Activated CD4-positive, alpha-beta T cell treated with anti-CD3 and anti-CD28 coated beads for 36 hours (primary cell): ENCODE measurements at regions of chr9 and their contacts with region 1.

Region 1: DNA sequence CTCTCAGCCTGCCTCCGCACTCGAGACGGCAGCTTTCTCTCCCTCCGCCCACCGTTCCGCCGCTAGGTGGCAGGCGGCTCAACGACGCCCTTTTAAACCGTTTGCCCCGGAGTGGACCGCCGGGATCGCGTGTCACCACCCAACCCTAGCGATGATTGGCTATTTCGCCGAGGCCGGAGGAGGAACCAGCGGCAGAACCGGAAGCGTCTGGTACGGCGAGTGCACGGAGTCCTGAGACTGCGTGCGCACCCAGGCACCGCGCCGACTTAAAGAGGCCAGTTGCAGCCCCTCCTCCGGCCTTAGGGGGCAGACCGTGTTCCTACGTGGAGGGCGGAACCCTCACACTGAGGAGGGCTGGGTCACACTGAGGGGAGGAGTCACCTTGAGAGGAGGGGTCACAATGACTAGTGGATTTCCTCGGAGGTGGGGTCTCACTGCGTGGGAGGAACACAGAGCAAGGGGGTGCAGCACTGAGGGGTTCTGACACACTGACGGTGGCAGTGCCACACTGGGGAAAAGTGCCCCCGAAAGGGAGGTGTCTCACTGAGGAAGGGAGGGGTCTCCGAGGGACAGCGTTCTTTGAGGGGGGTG is 980 bp upstream of the TESK1 start:
- DNase-seq: peak; percentile 100
- ATAC-seq: peak; percentile 93
- H3K4me3 Mint-ChIP-seq: peak overlapping the region; percentile 83
- H3K27ac Mint-ChIP-seq: peak overlapping the region; percentile 96
- H3K4me1 Mint-ChIP-seq: peaks cover 23% of the 10 kb centered on the region
- H3K27me3 Mint-ChIP-seq: no peaks in the 10 kb centered on the region

Region 2: GRCh38 chr9:35111001-35111933 is 492.8 kb before region 1 on chr9:
- CTCF ChIA-PET with region 1: no interaction called
- POLR2A ChIA-PET with region 1: no interaction called
- intact Hi-C with region 1: loop called (anchors 1 to 5 kb)
- DNase-seq: peak; percentile 98
- ATAC-seq: peak; percentile 82
- H3K4me3 Mint-ChIP-seq: peak overlapping the region; percentile 63
- H3K27ac Mint-ChIP-seq: peak overlapping the region; percentile 90
- H3K4me1 Mint-ChIP-seq: peaks cover 48% of the 10 kb centered on the region
- H3K27me3 Mint-ChIP-seq: no peaks in the 10 kb centered on the region

Region 3: DNA sequence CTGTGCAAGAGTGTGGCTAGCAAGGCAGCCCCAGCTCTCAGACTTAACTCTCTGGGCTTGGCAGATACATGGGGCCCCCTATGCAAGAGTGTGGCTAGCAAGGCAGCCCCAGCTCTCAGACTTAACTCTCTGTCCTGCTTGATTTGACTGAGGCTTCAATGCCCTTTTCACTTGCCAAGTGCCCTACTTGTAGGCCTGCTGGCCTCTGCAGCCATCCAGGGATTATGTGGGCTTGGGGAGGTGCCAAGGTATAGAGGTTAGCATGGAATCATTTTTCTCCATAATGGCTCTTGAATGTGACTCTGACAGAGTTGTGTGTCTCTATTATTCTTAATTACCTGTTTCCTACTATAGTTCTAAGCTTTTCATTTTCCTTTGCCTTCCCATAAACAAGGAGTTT is 229.6 kb before region 1 on chr9:
- CTCF ChIA-PET with region 1: no interaction called
- POLR2A ChIA-PET with region 1: no interaction called
- intact Hi-C with region 1: no loop called
- DNase-seq: no peak
- ATAC-seq: no peak
- H3K4me3 Mint-ChIP-seq: no peak overlapping the region
- H3K27ac Mint-ChIP-seq: no peak overlapping the region
- H3K4me1 Mint-ChIP-seq: no peaks in the 10 kb centered on the region
- H3K27me3 Mint-ChIP-seq: no peaks in the 10 kb centered on the region

Region 4: DNA sequence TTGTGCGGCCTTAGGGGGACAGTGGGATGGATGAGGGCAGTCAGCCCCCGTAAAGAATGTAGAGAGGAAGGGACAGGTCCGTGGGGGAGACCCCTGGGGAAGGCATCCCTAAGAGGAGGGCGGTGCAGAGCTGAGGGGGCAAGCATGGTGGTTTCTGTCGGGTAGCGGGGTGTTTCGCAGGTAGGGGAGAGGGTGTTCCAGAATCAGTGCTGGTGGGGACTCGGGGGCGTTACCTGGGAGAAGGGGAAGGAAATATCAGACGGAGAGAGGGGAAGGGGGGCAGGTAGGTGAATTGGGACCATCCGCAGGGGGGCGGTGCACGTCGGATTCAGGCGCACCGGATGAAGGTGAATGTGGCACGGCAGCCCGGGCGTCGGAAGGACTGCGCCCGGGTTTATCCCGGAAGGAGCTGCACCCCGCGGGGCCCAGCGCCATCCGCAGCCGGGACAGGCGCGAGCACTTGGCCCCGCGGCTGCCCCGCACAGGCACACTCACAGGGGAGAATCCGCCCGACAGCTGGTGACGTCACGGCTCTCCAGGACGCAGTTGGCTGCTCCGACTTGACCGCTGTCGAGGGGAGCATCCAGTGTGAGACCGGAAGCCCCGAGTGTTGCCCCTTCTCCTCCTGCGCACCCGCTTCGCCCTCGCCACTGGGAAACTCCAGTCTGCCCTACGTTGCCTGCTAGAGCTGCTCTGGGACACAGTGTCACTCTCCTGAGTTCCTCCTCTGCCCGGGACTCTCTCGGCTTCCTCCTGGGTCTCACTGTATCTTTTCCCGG is 12.8 kb after region 1 on chr9:
- CTCF ChIA-PET with region 1: interaction called, 5 read pairs
- POLR2A ChIA-PET with region 1: interaction called, 3 read pairs
- intact Hi-C with region 1: loop called in 1 of 2 experiments (anchors 1 kb)
- DNase-seq: peak; percentile 80
- ATAC-seq: peak; percentile 74
- H3K4me3 Mint-ChIP-seq: peak overlapping the region; percentile 77
- H3K27ac Mint-ChIP-seq: peak overlapping the region; percentile 79
- H3K4me1 Mint-ChIP-seq: peaks cover 38% of the 10 kb centered on the region
- H3K27me3 Mint-ChIP-seq: no peaks in the 10 kb centered on the region

Region 5: GRCh38 chr9:35748858-35749514 is 144.9 kb after region 1 on chr9 and contains the starts of genes GBA2 and RGP1:
- CTCF ChIA-PET with region 1: no interaction called
- POLR2A ChIA-PET with region 1: no interaction called
- intact Hi-C with region 1: loop called in 1 of 2 experiments (anchors 1 kb)
- DNase-seq: peak; percentile 83
- ATAC-seq: peak; percentile 79
- H3K4me3 Mint-ChIP-seq: peak within 1 kb of the TSS; percentile 93
- H3K27ac Mint-ChIP-seq: peak within 1 kb of the TSS; percentile 88
- H3K4me1 Mint-ChIP-seq: peaks cover 40% of the 10 kb centered on the region
- H3K27me3 Mint-ChIP-seq: no peaks in the 10 kb centered on the region
- total RNA-seq, gene GBA2: 19.6 to 23.7 TPM
- total RNA-seq, gene RGP1: 14.0 to 15.5 TPM

Region 6: GRCh38 chr9:35882263-35882848 is 278.3 kb after region 1 on chr9:
- CTCF ChIA-PET with region 1: no interaction called
- POLR2A ChIA-PET with region 1: no interaction called
- intact Hi-C with region 1: loop called in 1 of 2 experiments (anchors 5 kb)
- DNase-seq: peak; percentile 89
- ATAC-seq: peak; percentile 77
- H3K4me3 Mint-ChIP-seq: no peak overlapping the region
- H3K27ac Mint-ChIP-seq: no peak overlapping the region
- H3K4me1 Mint-ChIP-seq: no peaks in the 10 kb centered on the region
- H3K27me3 Mint-ChIP-seq: peaks cover 4% of the 10 kb centered on the region